Tibial artery (tissue), 4 donors: ENCODE measurements at regions of chr5 and their contacts with region 1.

Region 1: GRCh38 chr5:75319638-75320037 is 17.4 kb upstream of the HMGCR start:
- DNase-seq: no peak
- H3K4me3 ChIP-seq: no peak overlapping the region
- H3K27ac ChIP-seq: no peak overlapping the region
- H3K4me1 ChIP-seq: no peaks in the 10 kb centered on the region
- H3K27me3 ChIP-seq: no peaks in the 10 kb centered on the region
- CTCF ChIP-seq: no peak

Region 2: GRCh38 chr5:75336625-75337339 is 17.1 kb after region 1 on chr5 and contains the start of gene HMGCR:
- intact Hi-C with region 1: no loop called
- DNase-seq: peak; percentile 99
- H3K4me3 ChIP-seq: peak within 1 kb of the TSS; percentile 80 to 91
- H3K27ac ChIP-seq: peak within 1 kb of the TSS; percentile 87 to 88
- H3K4me1 ChIP-seq: peaks cover 0 to 17% (median 6%) of the 10 kb centered on the region in 4 donors
- H3K27me3 ChIP-seq: no peaks in the 10 kb centered on the region
- CTCF ChIP-seq: no peak

Region 3: DNA sequence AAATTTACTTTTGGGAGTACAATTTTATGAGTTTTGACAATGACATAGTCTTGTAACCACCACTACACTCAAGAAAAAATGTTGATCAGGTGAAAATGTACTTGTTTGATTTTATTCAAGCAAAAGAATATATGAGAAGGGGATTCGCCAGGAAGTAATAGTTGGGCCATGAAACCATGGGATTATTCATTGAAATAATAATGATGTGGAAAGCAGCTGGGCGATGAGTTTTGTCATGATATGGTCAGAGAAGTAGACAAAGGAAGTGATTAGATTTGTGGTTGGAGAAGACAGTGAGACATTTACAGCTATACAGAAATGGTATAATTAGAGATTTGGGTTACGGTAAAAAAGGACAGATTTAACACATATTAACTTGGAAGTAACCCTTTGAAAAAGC is 28.6 kb after region 1 on chr5:
- intact Hi-C with region 1: loop called (anchors 1 kb)
- DNase-seq: no peak
- H3K4me3 ChIP-seq: no peak overlapping the region
- H3K27ac ChIP-seq: no peak overlapping the region
- H3K4me1 ChIP-seq: no peaks in the 10 kb centered on the region
- H3K27me3 ChIP-seq: no peaks in the 10 kb centered on the region
- CTCF ChIP-seq: no peak

Region 4: DNA sequence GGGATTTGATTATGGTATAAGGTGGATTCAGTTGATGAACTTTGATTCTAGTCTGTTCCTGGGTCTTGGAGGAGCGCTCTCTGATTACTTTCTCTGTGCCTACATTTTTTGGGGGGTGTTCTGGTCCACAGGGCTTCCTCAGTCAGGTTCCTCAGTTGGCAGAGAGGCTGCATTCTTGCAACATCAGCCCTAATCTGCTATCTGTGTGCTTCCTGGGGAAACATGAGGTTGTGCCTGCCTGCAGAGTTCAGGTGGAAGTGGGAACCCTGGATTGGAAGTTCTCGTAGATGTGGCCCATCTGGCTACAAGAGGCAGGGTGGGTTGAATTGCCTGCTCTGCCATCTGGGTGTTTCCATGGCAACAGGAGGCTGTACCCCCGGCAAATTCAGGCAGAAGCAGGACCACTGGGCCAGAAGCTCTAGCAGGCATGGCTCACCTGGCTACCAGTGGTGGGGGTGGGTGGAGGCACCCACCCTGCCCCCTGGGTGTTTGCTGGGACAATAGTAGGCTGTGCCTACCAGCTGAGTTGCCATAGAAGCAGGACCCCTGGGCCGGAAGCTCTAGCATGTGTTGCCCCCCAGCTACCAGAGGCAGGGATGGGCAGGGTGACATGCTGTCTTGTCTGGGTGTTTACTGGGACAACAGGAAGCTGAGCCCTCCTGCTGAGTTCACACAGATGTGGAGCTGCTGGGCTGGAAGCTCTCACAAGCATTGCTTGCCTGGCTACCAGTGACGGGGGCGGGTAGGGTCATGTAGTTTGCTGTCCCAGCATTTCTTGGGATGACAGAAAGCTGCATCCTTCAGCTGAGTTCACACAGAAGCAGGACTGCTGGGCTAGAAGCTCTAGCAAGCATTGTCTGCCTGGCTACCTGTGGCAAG is 216.7 kb after region 1 on chr5:
- intact Hi-C with region 1: no loop called
- DNase-seq: no peak
- H3K4me3 ChIP-seq: no peak overlapping the region
- H3K27ac ChIP-seq: no peak overlapping the region
- H3K4me1 ChIP-seq: peaks cover 0 to 25% (median 10%) of the 10 kb centered on the region in 4 donors
- H3K27me3 ChIP-seq: no peaks in the 10 kb centered on the region
- CTCF ChIP-seq: no peak